ENCODE measurements at regions of chr2 and their contacts with region 1.

Region 1: GRCh38 chr2:206981739-206982340 is 42.5 kb downstream of the CPO start:
- DNase-seq: peak; percentile 76 to 79
- ATAC-seq: peak; percentile 88 to 97 (median 94)
- H3K4me3 ChIP-seq: no peak overlapping the region
- H3K27ac ChIP-seq: peak overlapping the region in 1 of 10 donors; percentile 10
- H3K4me1 ChIP-seq: peaks cover 3 to 35% (median 22%) of the 10 kb centered on the region in 9 donors
- H3K27me3 ChIP-seq: no peaks in the 10 kb centered on the region
- CTCF ChIP-seq: peak; percentile 82 to 94 (median 87)

Region 2: GRCh38 chr2:206597717-206598218 is 384.1 kb before region 1 on chr2:
- intact Hi-C with region 1: no loop called
- DNase-seq: no peak
- ATAC-seq: no peak
- H3K4me3 ChIP-seq: no peak overlapping the region
- H3K27ac ChIP-seq: no peak overlapping the region
- H3K4me1 ChIP-seq: no peaks in the 10 kb centered on the region
- H3K27me3 ChIP-seq: no peaks in the 10 kb centered on the region
- CTCF ChIP-seq: no peak

Region 3: GRCh38 chr2:206693399-206694137 is 288.3 kb before region 1 on chr2:
- intact Hi-C with region 1: loop called in 1 of 10 experiments (anchors 10 kb)
- DNase-seq: peak in 1 of 2 donors; percentile 22
- ATAC-seq: peak in 4 of 8 donors; percentile 37 to 64 (median 57)
- H3K4me3 ChIP-seq: no peak overlapping the region
- H3K27ac ChIP-seq: no peak overlapping the region
- H3K4me1 ChIP-seq: no peaks in the 10 kb centered on the region
- H3K27me3 ChIP-seq: no peaks in the 10 kb centered on the region
- CTCF ChIP-seq: peak; percentile 42 to 81 (median 67)

Region 4: DNA sequence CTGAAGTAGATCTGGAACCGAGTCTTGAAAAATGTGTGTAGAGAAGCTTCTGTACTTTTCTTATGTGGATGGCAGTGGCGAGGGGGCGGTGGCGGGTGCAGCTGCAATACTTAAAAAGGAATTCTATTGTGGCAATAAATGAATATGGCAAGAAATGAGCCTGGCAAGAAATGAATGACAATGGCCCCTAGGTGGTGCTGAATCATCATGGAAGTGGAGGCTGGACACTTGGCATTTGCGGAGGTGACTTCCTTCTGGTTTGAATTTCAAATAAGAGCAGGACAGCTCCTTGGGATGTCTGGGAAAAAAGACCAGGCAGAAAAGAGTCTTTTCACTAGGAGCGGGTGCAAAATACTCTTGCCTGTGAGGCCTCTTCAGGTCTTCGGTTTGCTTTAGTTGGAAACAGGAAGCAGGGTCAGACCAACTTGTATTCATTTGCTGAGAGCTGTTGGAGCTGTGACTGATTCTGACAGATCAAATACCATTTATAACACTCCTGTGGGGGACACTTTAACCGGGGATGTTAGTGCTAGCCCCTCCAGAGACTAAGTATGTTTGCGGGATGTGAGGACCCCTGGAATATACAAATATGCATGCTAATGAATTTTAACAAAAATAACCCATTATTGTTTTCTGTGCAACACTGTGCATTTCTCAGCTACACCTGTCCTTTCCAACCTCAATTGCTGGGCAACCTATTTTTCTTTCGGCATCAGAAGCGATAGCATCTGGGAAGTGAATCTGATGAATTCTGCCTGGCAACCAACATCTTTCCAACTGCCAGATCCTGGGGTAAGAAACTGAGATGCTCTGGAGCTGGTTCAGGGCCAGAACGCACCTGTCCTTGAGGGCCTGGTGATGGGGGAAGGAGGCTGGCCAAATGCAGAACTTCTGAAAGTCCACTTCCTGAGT is 181.1 kb before region 1 on chr2:
- intact Hi-C with region 1: loop called (anchors 1 to 10 kb)
- DNase-seq: peak; percentile 21 to 75
- ATAC-seq: peak; percentile 51 to 86 (median 82)
- H3K4me3 ChIP-seq: peak overlapping the region in 4 of 10 donors; percentile 6 to 22 (median 17)
- H3K27ac ChIP-seq: no peak overlapping the region
- H3K4me1 ChIP-seq: peaks cover 0 to 32% (median 12%) of the 10 kb centered on the region in 9 donors
- H3K27me3 ChIP-seq: no peaks in the 10 kb centered on the region
- CTCF ChIP-seq: peak; percentile 50 to 82 (median 75)

Region 5: DNA sequence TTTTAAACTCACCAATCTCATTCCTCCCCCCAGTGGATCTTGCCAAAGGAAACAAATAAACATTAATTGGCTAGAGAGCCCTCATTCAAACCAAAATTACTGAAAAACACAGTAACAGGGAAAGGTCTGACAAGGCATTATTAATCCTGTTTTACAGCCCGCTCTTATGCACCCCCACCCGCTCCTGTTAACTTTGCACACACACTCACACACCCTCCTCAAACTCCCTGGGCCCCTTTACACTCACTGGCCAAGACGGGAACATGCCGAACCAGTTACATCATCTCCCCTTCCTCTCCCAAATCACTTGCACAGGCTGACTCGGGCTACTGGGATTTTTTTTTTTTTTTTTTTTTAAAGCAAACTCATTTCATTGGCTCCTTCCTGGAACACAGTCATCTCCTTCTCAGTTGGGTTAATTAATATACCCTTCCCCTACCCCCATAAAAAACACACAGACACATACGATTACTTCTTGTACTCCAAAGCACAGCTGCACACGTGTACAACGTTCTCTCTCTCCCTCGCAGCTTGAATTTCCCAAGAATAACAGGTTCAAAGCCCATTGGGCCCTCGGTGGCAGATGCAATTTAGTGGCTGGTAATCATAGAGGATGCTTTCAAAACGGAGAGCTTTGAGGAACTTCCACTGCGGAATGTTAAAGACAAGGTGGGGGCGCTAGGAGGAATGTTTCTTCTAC is 152.1 kb after region 1 on chr2:
- intact Hi-C with region 1: loop called in 1 of 10 experiments (anchors 10 kb)
- DNase-seq: peak; percentile 56 to 88
- ATAC-seq: peak; percentile 93 to 98 (median 96)
- H3K4me3 ChIP-seq: peak overlapping the region in 4 of 10 donors; percentile 5 to 32 (median 18)
- H3K27ac ChIP-seq: peak overlapping the region; percentile 76 to 94 (median 87)
- H3K4me1 ChIP-seq: peaks cover 40 to 100% (median 96%) of the 10 kb centered on the region in 9 donors
- H3K27me3 ChIP-seq: no peaks in the 10 kb centered on the region
- CTCF ChIP-seq: no peak

Region 6: GRCh38 chr2:207176247-207176646 is 194.4 kb after region 1 on chr2:
- intact Hi-C with region 1: loop called in 1 of 10 experiments (anchors 10 kb)
- DNase-seq: no peak
- ATAC-seq: no peak
- H3K4me3 ChIP-seq: no peak overlapping the region
- H3K27ac ChIP-seq: no peak overlapping the region
- H3K4me1 ChIP-seq: peaks cover 0 to 6% (median 0%) of the 10 kb centered on the region in 9 donors
- H3K27me3 ChIP-seq: no peaks in the 10 kb centered on the region
- CTCF ChIP-seq: no peak

Region 7: DNA sequence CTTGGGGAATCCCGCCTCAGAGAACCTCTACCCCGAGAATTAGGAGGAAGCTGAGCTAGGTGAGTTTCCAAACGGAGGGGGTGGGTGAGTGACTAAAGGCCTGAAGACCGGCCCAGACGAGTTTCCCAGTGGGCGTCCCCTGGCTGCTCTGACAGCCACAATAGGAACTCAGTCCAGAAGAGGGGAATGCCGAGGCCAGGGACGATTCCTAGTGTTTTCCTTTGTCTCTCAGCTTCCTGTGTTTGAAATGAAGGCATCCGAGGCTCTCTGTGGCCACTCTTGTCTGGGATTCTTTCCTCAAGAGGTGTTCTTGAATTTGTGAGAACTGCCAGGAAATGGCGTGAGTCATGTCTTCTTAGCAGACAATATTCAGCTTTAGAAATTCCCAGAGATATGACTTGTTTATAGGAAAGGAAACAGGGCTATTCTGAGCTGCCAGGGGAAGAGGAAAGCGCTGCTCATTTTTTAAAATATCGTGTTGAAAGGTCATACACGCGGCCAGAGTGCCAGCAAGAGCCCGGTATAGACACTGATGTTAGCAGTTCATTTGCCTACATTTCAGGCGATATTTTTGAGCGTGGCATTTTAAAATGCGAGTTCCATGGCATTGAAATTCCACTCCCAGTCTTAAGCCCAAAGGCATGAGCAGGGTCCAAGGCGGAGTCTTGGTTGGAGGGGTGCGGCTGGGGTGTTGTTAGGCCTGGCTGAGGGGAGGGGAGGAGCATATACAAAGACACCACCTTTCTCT is 353.0 kb after region 1 on chr2:
- intact Hi-C with region 1: loop called in 4 of 10 experiments (anchors 5 to 10 kb)
- DNase-seq: peak; percentile 60 to 80
- ATAC-seq: peak; percentile 54 to 88 (median 85)
- H3K4me3 ChIP-seq: peak overlapping the region in 9 of 10 donors; percentile 2 to 41 (median 31)
- H3K27ac ChIP-seq: peak overlapping the region; percentile 60 to 96 (median 92)
- H3K4me1 ChIP-seq: peaks cover 0 to 82% (median 50%) of the 10 kb centered on the region in 9 donors
- H3K27me3 ChIP-seq: no peaks in the 10 kb centered on the region
- CTCF ChIP-seq: peak in 2 of 9 donors; percentile 8 to 14

Region 8: DNA sequence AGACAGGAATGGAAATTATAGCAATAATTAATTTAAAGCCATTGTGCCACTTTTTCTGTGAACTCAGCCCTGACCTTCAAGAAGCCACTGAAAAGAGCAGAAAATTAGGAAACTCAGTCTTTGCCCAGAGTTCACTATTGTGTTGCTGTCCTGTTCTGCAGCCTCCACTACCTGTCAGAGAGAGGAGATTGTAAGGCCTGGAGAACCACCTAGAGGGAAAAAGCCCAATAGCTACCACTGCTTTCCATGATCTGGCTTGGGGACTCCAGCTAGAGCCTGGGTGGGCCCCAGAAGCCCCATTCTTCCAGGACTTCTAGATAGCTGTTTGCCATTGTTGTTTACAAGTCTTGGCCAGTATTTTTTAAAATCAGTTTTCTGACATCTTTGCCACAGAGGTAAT is 360.0 kb after region 1 on chr2:
- intact Hi-C with region 1: loop called in 5 of 10 experiments (anchors 5 to 10 kb)
- DNase-seq: no peak
- ATAC-seq: no peak
- H3K4me3 ChIP-seq: no peak overlapping the region
- H3K27ac ChIP-seq: no peak overlapping the region
- H3K4me1 ChIP-seq: peaks cover 0 to 33% (median 20%) of the 10 kb centered on the region in 9 donors
- H3K27me3 ChIP-seq: no peaks in the 10 kb centered on the region
- CTCF ChIP-seq: peak in 4 of 9 donors; percentile 13 to 30 (median 23)

Measured in heart right ventricle (tissue), 16 donors.